ENCODE measurements at regions of chr15 and their contacts with region 1.

Region 1: DNA sequence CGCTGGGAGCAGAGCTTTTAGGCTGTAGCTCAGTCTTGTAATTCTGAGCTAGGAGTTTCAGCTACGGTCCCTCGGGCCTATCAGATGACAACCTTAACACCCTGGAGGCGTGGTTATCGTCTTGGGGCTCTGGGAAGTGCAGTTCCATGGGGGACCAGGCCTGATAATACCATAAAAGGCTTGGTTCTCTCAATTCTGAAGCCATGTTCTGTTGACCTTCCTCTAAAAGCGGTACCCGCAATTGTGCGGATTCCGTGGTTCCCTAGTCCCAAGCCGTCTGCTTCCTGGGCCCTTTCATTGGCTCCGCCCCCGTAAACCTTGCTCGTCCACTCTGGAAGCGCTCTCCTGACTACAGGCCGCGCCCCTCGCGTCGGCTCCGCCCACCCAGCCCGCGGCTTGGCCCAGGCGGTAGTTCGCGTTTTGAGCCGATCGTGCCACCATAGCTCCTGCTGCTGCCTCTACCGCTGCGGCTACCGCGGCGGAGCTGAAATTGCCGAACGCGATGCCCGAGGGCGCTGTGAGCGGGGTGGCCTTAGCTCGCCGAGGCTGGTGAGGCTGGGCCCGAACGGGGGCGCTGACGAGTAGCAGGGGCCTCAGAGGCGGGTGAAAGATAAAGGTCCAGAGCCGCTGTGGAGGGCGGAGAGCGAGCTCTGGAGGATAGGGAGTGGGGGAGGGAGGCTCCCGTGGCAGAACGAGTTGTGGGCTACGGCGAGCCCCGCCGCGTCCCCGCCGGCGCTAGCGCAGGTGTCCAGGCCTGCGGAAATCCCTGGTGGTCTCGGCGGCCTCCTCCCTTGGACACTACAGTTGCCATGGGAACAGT is at the start of gene MAPKBP1:
- DNase-seq: peak; percentile 99
- H3K4me3 ChIP-seq: peak within 1 kb of the TSS; percentile 61 to 69 (median 64)
- H3K27ac ChIP-seq: peak within 1 kb of the TSS; percentile 89
- H3K4me1 ChIP-seq: peaks cover 37% of the 10 kb centered on the region
- H3K27me3 ChIP-seq: no peaks in the 10 kb centered on the region
- CTCF ChIP-seq: peak; percentile 54 to 79
- total RNA-seq, gene MAPKBP1: 41.3 to 109 TPM

Region 2: DNA sequence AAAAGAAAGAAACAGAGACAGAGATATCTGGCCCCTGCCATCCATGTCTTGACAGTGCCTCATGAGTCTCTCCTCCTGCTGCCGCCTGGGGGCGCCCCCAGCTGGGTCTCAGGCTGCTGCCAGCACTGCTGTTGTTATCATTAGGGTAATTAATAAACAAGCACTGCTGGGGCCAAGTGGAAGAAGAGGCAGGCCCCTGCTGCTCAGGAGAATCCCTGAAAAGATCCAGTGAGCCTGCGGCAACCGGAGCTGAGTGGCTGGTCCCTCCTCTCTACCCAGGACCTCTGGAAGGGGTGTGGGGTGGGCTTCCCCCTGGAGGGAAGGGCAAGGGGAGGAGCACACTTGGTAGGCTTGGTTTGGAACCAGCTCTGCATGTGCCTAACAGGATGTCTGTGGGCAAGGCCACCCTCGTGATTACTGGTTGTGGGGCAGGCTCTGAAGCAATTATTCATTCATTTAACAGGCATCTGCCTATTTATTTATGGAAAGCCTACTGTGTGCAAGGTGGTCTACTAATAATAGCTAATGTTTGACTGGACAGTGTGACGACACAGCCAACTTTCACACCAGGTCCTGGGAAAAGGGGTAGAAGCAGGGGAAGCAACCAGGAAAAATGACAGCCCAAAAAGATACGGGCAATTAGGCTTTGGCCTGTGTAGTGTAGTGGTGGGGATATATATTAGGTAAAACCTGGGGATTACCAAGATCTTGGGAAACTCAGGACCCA is 216.4 kb before region 1 on chr15:
- CTCF ChIA-PET with region 1: interaction called, 4 read pairs
- dilution Hi-C with region 1: no loop called
- in situ Hi-C with region 1: no loop called
- intact Hi-C with region 1: loop called (anchors 2 kb)
- DNase-seq: peak; percentile 49
- H3K4me3 ChIP-seq: peak overlapping the region in 2 of 3 experiments; percentile 42 to 51
- H3K27ac ChIP-seq: no peak overlapping the region
- H3K4me1 ChIP-seq: peaks cover 17% of the 10 kb centered on the region
- H3K27me3 ChIP-seq: no peaks in the 10 kb centered on the region
- CTCF ChIP-seq: peak; percentile 88 to 92

Region 3: DNA sequence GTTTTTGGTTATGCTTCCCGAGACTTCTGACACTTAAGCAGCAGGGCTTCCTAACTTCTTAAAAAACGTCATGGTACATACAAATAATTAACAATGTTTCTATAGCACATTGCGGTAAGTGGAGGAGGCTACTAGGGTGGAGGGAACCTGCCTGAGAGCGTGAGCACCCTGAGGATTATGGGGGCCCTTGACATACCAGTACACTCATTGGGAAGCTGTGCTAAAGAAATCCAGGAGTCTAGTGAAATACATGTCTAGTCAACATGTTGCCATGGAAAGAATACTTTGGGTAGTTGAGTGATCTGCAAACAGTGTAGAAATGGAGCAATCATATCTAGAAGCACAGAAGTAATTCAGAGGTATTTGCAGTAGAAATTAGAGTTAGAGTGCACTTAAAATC is 39.2 kb before region 1 on chr15:
- CTCF ChIA-PET with region 1: no interaction called
- dilution Hi-C with region 1: loop called (anchors 5 kb)
- in situ Hi-C with region 1: no loop called
- intact Hi-C with region 1: no loop called
- DNase-seq: no peak
- H3K4me3 ChIP-seq: no peak overlapping the region
- H3K27ac ChIP-seq: no peak overlapping the region
- H3K4me1 ChIP-seq: no peaks in the 10 kb centered on the region
- H3K27me3 ChIP-seq: no peaks in the 10 kb centered on the region
- CTCF ChIP-seq: no peak

Region 4: DNA sequence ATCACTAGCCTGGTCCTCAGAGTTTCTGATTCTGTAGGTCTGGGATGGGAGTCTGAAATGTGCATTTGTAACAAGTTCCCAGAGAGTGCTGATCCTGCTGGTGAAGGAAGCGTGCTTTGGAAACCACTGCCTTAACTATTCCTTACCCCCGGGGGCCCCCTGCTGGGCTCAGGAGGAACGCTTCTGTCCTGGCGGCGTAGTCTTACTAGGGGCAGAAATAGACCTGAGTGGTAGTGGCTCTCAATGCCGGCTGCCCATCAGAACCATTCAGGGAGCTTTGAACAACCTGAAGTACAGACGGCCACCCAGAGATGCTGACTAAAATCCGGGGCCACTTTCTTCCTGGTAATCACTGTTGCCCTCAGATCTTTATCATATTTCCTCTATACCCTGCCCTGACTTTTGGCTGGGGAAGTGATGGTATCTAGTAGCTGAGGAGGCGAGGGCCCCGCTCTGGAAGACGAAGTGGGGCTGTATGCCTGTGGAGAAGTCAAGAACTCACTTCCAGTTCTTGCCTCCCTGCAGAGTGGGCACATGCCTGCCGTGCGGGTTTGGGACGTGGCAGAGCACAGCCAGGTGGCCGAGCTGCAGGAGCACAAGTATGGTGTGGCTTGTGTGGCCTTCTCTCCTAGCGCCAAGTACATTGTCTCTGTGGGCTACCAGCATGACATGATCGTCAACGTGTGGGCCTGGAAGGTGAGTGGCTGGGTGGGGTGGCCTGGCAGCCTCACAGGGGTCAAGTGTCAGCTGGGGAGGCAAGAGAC is 37.3 kb after region 1 on chr15:
- CTCF ChIA-PET with region 1: interaction called, 32 read pairs
- dilution Hi-C with region 1: loop called (anchors 5 kb)
- in situ Hi-C with region 1: loop called (anchors 5 kb)
- intact Hi-C with region 1: loop called (anchors 1 kb)
- DNase-seq: peak; percentile 60
- H3K4me3 ChIP-seq: no peak overlapping the region
- H3K27ac ChIP-seq: no peak overlapping the region
- H3K4me1 ChIP-seq: peaks cover 24% of the 10 kb centered on the region
- H3K27me3 ChIP-seq: no peaks in the 10 kb centered on the region
- CTCF ChIP-seq: peak; percentile 87 to 93

Region 5: GRCh38 chr15:41904541-41905005 is 130.3 kb after region 1 on chr15:
- CTCF ChIA-PET with region 1: interaction called, 9 read pairs
- dilution Hi-C with region 1: no loop called
- in situ Hi-C with region 1: no loop called
- intact Hi-C with region 1: loop called (anchors 1 kb)
- DNase-seq: peak; percentile 42
- H3K4me3 ChIP-seq: no peak overlapping the region
- H3K27ac ChIP-seq: no peak overlapping the region
- H3K4me1 ChIP-seq: no peaks in the 10 kb centered on the region
- H3K27me3 ChIP-seq: no peaks in the 10 kb centered on the region
- CTCF ChIP-seq: peak; percentile 80 to 88

Region 6: GRCh38 chr15:41989259-41989933 is 215.1 kb after region 1 on chr15:
- CTCF ChIA-PET with region 1: no interaction called
- dilution Hi-C with region 1: no loop called
- in situ Hi-C with region 1: no loop called
- intact Hi-C with region 1: loop called (anchors 5 kb)
- DNase-seq: peak; percentile 53
- H3K4me3 ChIP-seq: no peak overlapping the region
- H3K27ac ChIP-seq: no peak overlapping the region
- H3K4me1 ChIP-seq: no peaks in the 10 kb centered on the region
- H3K27me3 ChIP-seq: no peaks in the 10 kb centered on the region
- CTCF ChIP-seq: peak; percentile 98 to 99

Region 7: DNA sequence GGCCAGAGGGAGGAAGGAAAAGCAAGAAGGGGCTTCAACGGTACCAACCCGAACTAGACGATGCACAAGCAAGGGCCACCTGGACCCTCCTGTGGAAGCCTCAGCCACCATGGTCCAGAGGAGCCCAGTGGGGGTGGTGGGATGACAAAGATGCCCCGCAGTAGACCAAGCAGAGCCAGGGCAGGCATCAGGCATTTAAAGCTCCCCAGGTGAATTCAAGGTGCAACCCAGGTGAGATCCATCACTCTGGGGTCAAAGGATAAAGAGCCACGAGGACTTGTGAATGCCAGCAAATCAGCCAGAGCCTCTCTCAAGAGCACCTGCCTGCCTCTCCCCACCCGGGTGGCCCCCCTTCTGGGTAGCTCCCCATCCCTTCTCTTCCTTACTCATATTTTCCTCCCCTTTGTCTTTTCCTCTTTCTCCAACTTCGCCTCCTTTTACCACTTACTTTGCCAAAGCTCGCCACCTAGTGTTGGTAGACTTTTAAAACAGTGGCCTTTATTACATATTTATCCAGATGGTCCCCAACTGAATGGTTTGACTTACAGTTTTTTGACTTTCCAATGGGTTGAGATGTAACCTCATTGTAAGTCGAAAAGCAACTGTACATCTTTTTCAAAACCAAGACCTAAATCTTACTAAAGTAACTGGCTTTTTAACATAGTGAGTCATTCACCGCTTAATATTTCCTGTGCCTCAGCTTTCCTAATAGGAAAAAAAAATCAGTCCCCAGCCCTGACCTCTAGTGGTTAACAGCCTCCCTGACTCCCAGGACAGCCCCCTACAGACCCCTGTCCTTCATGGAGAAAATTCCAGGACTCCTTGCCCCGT is 363.4 kb after region 1 on chr15:
- CTCF ChIA-PET with region 1: no interaction called
- dilution Hi-C with region 1: no loop called
- in situ Hi-C with region 1: no loop called
- intact Hi-C with region 1: loop called (anchors 5 kb)
- DNase-seq: peak; percentile 40
- H3K4me3 ChIP-seq: no peak overlapping the region
- H3K27ac ChIP-seq: no peak overlapping the region
- H3K4me1 ChIP-seq: no peaks in the 10 kb centered on the region
- H3K27me3 ChIP-seq: no peaks in the 10 kb centered on the region
- CTCF ChIP-seq: peak; percentile 53 to 68

Measured in mammary epithelial cell (primary cell).